ENCODE measurements at regions of chr11 and their contacts with region 1.

Region 1: GRCh38 chr11:112219476-112220232 is 6.6 kb upstream of the PTS start:
- DNase-seq: peak in 7 of 9 donors; percentile 54 to 77 (median 69)
- ATAC-seq: peak; percentile 99
- H3K4me3 ChIP-seq: no peak overlapping the region
- H3K4me3 Mint-ChIP-seq: no peak overlapping the region
- H3K27ac ChIP-seq: no peak overlapping the region
- H3K27ac Mint-ChIP-seq: peak overlapping the region in 2 of 9 donors; percentile 38 to 59
- H3K4me1 ChIP-seq: no peaks in the 10 kb centered on the region
- H3K4me1 Mint-ChIP-seq: peaks cover 0 to 17% (median 3%) of the 10 kb centered on the region in 7 donors
- H3K27me3 ChIP-seq: no peaks in the 10 kb centered on the region
- H3K27me3 Mint-ChIP-seq: peaks cover 0 to 4% (median 0%) of the 10 kb centered on the region in 5 donors

Region 2: GRCh38 chr11:112004389-112004788 is 215.3 kb before region 1 on chr11:
- CTCF ChIA-PET with region 1: no interaction called
- POLR2A ChIA-PET with region 1: no interaction called
- intact Hi-C with region 1: no loop called
- DNase-seq: peak in 1 of 9 donors; percentile 3
- ATAC-seq: peak; percentile 68
- H3K4me3 ChIP-seq: no peak overlapping the region
- H3K4me3 Mint-ChIP-seq: no peak overlapping the region
- H3K27ac ChIP-seq: no peak overlapping the region
- H3K27ac Mint-ChIP-seq: peak overlapping the region in 1 of 9 donors; percentile 20
- H3K4me1 ChIP-seq: no peaks in the 10 kb centered on the region
- H3K4me1 Mint-ChIP-seq: no peaks in the 10 kb centered on the region
- H3K27me3 ChIP-seq: no peaks in the 10 kb centered on the region
- H3K27me3 Mint-ChIP-seq: peaks cover 0 to 30% (median 14%) of the 10 kb centered on the region in 5 donors

Region 3: DNA sequence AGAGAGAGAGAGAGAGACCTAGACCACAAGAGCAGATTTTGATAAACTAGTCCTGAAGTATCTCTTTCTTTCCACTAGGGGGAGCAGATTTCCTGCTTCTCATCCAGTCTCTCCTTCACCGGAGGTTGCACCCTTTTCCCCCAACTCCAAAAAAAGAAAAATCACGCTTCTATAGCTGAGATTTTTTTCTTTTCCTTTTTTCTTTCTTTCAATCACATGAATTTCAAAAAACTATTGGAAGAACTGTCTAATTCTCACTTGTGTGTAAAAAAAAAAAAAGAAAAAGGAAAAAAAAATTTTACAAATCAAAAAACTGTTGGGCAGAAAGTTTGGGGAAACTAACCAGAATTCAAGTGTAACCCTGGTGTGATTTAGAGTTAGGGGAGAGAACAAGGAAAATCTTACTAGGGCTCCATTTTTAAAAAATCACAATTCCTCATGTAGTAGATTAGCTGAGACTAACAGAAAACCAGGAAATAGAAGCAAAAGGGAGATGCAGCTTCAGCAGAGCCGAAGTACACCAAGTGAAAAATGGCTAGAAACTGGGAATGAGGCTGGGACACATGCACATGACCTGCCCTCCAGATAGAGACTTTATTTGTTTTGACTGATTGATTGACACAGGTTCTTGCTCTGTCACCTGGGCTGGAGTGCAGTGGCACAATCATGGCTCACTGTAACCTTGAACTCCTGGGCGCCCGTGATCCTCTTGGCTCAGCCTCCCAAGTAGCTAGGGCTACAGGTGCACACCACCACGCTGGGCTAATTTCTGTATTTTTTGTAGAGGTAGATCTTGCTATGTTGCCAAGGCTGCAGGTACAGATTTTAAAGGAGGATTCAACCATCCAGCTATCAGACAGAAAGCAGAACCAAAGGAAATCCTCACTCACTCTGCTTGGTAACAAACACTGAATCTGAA is 105.9 kb before region 1 on chr11:
- CTCF ChIA-PET with region 1: interaction called, 3 read pairs
- POLR2A ChIA-PET with region 1: no interaction called
- intact Hi-C with region 1: loop called (anchors 1 to 2 kb)
- DNase-seq: peak in 6 of 9 donors; percentile 17 to 46 (median 30)
- ATAC-seq: peak; percentile 76
- H3K4me3 ChIP-seq: no peak overlapping the region
- H3K4me3 Mint-ChIP-seq: peak overlapping the region in 1 of 10 donors; percentile 4
- H3K27ac ChIP-seq: no peak overlapping the region
- H3K27ac Mint-ChIP-seq: no peak overlapping the region
- H3K4me1 ChIP-seq: no peaks in the 10 kb centered on the region
- H3K4me1 Mint-ChIP-seq: peaks cover 0 to 21% (median 8%) of the 10 kb centered on the region in 7 donors
- H3K27me3 ChIP-seq: no peaks in the 10 kb centered on the region
- H3K27me3 Mint-ChIP-seq: no peaks in the 10 kb centered on the region

Region 4: GRCh38 chr11:112453601-112454577 is 234.2 kb after region 1 on chr11:
- CTCF ChIA-PET with region 1: interaction called, 3 read pairs
- POLR2A ChIA-PET with region 1: no interaction called
- intact Hi-C with region 1: loop called in 1 of 2 experiments (anchors 5 kb)
- DNase-seq: peak in 5 of 9 donors; percentile 6 to 31 (median 29)
- ATAC-seq: peak; percentile 67
- H3K4me3 ChIP-seq: no peak overlapping the region
- H3K4me3 Mint-ChIP-seq: no peak overlapping the region
- H3K27ac ChIP-seq: no peak overlapping the region
- H3K27ac Mint-ChIP-seq: no peak overlapping the region
- H3K4me1 ChIP-seq: no peaks in the 10 kb centered on the region
- H3K4me1 Mint-ChIP-seq: peaks cover 4 to 12% (median 6%) of the 10 kb centered on the region in 7 donors
- H3K27me3 ChIP-seq: no peaks in the 10 kb centered on the region
- H3K27me3 Mint-ChIP-seq: peaks cover 0 to 15% (median 3%) of the 10 kb centered on the region in 5 donors

Region 5: GRCh38 chr11:112588252-112588694 is 368.6 kb after region 1 on chr11:
- CTCF ChIA-PET with region 1: interaction called, 5 read pairs
- POLR2A ChIA-PET with region 1: no interaction called
- intact Hi-C with region 1: loop called in 1 of 2 experiments (anchors 1 kb)
- DNase-seq: peak in 7 of 9 donors; percentile 21 to 53 (median 48)
- ATAC-seq: peak; percentile 78
- H3K4me3 ChIP-seq: no peak overlapping the region
- H3K4me3 Mint-ChIP-seq: peak overlapping the region in 4 of 10 donors; percentile 11 to 71 (median 46)
- H3K27ac ChIP-seq: no peak overlapping the region
- H3K27ac Mint-ChIP-seq: no peak overlapping the region
- H3K4me1 ChIP-seq: no peaks in the 10 kb centered on the region
- H3K4me1 Mint-ChIP-seq: peaks cover 0 to 6% (median 0%) of the 10 kb centered on the region in 7 donors
- H3K27me3 ChIP-seq: no peaks in the 10 kb centered on the region
- H3K27me3 Mint-ChIP-seq: peaks cover 0 to 5% (median 3%) of the 10 kb centered on the region in 5 donors

Region 6: DNA sequence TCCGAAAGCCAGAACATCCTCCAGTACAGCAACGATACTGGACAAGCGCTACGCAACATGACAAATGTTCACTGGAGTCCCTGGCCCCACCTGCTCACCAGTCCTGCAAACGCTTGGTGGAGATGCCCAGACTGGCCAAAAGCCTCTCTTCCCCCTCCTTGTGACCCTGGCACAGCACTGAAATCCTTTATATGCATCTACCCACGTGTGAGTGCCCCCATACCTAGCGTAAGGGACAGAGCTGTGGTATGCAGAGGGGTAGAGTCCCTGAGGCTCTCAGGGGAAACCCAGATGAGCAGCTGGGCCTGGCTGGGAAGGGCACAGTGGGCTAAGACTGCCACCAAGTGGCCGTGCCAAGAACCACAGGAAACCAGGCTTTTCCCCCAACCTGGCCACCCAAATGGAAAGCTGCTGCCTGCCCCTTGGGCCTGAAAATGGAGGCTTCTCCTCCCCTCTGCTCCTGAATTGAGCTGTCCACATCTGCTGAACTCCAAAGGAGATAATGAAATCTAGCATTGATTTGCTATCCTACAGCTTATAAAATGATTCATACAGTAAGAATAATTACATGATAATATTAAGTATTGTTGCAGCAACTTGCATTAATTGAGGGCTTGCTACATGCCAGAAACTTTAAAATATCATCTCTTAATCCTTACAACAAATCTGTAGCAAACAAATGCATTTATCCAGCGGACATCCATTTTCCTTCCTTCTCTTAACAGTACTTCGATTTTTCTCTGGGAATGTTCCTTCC is 1070.0 kb after region 1 on chr11:
- CTCF ChIA-PET with region 1: interaction called, 4 read pairs
- POLR2A ChIA-PET with region 1: no interaction called
- intact Hi-C with region 1: loop called in 1 of 2 experiments (anchors 1 kb)
- DNase-seq: peak; percentile 22 to 69 (median 51)
- ATAC-seq: peak; percentile 90
- H3K4me3 ChIP-seq: no peak overlapping the region
- H3K4me3 Mint-ChIP-seq: no peak overlapping the region
- H3K27ac ChIP-seq: no peak overlapping the region
- H3K27ac Mint-ChIP-seq: no peak overlapping the region
- H3K4me1 ChIP-seq: no peaks in the 10 kb centered on the region
- H3K4me1 Mint-ChIP-seq: no peaks in the 10 kb centered on the region
- H3K27me3 ChIP-seq: no peaks in the 10 kb centered on the region
- H3K27me3 Mint-ChIP-seq: peaks cover 0 to 12% (median 8%) of the 10 kb centered on the region in 5 donors

Region 7: DNA sequence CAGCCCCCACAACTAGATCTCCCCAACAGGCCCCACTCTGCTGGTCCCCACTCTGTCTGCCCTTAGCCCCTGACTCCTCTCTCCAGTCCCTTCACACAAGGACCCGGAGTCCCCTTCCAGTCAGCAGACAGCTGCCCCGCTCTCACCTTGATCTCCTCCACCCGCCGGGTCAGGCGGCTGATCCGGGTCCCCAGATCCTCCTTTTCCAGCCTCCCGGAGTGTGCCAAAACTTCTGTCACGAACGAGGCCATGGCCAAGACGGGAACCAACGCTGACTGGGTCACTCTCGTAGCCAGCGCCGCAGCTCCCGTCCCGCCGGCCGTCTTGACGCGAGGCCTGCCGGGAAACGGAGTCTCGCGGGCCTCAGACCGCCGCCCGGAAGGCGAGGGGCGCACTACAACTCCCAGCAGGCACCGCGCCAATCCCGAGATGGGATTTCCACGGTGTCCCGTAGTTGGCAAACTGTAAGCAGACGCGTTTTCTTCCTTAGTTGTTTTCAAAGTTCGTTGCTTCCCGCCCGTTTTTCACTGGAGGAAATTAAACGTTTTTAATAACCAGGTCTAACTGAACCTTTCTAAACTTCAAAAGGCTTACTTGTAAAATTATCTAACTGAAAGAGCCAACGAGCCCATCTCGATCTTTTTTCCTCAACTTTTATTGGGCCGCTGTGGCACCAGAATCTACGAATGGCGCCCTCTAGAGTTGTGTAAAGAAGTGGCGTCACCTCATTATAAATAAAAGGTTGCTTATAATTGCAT is 1553.9 kb after region 1 on chr11 and contains the start of gene ZW10:
- CTCF ChIA-PET with region 1: no interaction called
- POLR2A ChIA-PET with region 1: no interaction called
- intact Hi-C with region 1: loop called (anchors 2 to 10 kb)
- DNase-seq: peak; percentile 86 to 92 (median 91)
- ATAC-seq: peak; percentile 99
- H3K4me3 ChIP-seq: peak within 1 kb of the TSS; percentile 86
- H3K4me3 Mint-ChIP-seq: peak within 1 kb of the TSS; percentile 92 to 100 (median 98)
- H3K27ac ChIP-seq: peak within 1 kb of the TSS; percentile 81
- H3K27ac Mint-ChIP-seq: peak within 1 kb of the TSS; percentile 89 to 97 (median 95)
- H3K4me1 ChIP-seq: peaks cover 0 to 4% of the 10 kb centered on the region in 2 donors
- H3K4me1 Mint-ChIP-seq: peaks cover 19 to 39% (median 30%) of the 10 kb centered on the region in 7 donors
- H3K27me3 ChIP-seq: no peaks in the 10 kb centered on the region
- H3K27me3 Mint-ChIP-seq: peaks cover 0 to 10% (median 0%) of the 10 kb centered on the region in 5 donors
- total RNA-seq, gene ZW10: 5.0 to 19.0 (median 10.2) TPM

Measured in naive thymus-derived CD4-positive, alpha-beta T cell (primary cell).